Mammary epithelial cell (primary cell): ENCODE measurements at regions of chrX and their contacts with region 1.

Region 1: GRCh38 chrX:110759785-110760184 is 35.8 kb downstream of the CHRDL1 start:
- DNase-seq: peak; percentile 4
- H3K4me3 ChIP-seq: no peak overlapping the region
- H3K27ac ChIP-seq: no peak overlapping the region
- H3K4me1 ChIP-seq: no peaks in the 10 kb centered on the region
- H3K27me3 ChIP-seq: peaks cover 2% of the 10 kb centered on the region
- CTCF ChIP-seq: no peak

Region 2: GRCh38 chrX:110418316-110419235 is 341.2 kb before region 1 on chrX:
- CTCF ChIA-PET with region 1: interaction called, 10 read pairs
- dilution Hi-C with region 1: no loop called
- in situ Hi-C with region 1: no loop called
- intact Hi-C with region 1: no loop called
- DNase-seq: no peak
- H3K4me3 ChIP-seq: no peak overlapping the region
- H3K27ac ChIP-seq: no peak overlapping the region
- H3K4me1 ChIP-seq: peaks cover 33% of the 10 kb centered on the region
- H3K27me3 ChIP-seq: no peaks in the 10 kb centered on the region
- CTCF ChIP-seq: peak; percentile 48 to 49

Region 3: GRCh38 chrX:112628288-112628687 is 1868.5 kb after region 1 on chrX:
- CTCF ChIA-PET with region 1: no interaction called
- dilution Hi-C with region 1: no loop called
- in situ Hi-C with region 1: no loop called
- intact Hi-C with region 1: loop called (anchors 10 kb)
- DNase-seq: no peak
- H3K4me3 ChIP-seq: no peak overlapping the region
- H3K27ac ChIP-seq: no peak overlapping the region
- H3K4me1 ChIP-seq: no peaks in the 10 kb centered on the region
- H3K27me3 ChIP-seq: peaks cover 5% of the 10 kb centered on the region
- CTCF ChIP-seq: no peak